Activated B cell treated with CpG ODN at 0.5 μM for 24 hours (primary cell): ENCODE measurements at regions of chr7 and their contacts with region 1.

Region 1: DNA sequence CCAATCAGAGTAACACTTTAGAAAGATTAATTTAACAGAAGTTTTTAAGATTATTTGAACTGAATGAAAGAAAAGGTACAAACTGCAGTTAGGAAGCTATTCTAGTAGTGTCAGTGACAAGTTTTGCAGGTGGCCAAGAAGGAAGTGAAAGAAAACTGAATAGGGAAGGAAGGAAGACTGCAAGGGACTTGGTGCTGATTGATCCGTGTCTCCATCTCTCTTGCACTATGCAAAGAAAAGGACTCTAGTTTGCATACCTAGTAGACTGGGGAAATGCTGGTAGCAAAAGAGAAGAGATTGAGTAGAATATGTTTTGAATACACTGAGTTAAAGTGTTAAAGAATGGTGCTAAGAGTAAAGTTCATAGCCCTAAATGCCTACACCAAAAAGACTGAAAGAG is 33.0 kb downstream of the OR6V1 start:
- DNase-seq: no peak
- ATAC-seq: peak; percentile 98
- H3K4me3 Mint-ChIP-seq: peak overlapping the region; percentile 67
- H3K27ac Mint-ChIP-seq: peak overlapping the region; percentile 88
- H3K4me1 Mint-ChIP-seq: peaks cover 68% of the 10 kb centered on the region
- H3K27me3 Mint-ChIP-seq: no peaks in the 10 kb centered on the region
- CTCF ChIP-seq: no peak

Region 2: DNA sequence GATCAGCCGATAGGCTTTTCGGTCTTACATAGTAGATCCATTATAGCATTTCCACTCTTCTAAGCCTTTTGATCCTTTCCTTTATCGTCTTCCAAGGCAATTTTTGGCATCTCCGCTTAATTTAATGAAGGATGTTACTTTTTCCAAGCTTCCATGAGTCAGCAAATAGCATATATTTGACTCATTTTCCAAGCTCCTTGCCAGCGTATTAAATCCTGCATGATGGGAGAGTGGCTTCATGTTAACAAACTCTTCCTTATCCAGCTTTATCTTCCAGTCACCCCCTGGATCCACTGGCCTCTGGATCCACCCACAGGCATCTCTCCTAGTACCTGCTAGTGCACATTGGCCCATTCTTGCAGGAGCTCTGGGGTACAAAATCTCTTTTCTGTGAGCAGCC is 71.2 kb before region 1 on chr7:
- CTCF ChIA-PET with region 1: interaction called, 12 read pairs
- POLR2A ChIA-PET with region 1: interaction called, 13 read pairs
- intact Hi-C with region 1: loop called (anchors 1 kb)
- DNase-seq: no peak
- ATAC-seq: no peak
- H3K4me3 Mint-ChIP-seq: peak overlapping the region; percentile 21
- H3K27ac Mint-ChIP-seq: peak overlapping the region; percentile 95
- H3K4me1 Mint-ChIP-seq: peaks cover 83% of the 10 kb centered on the region
- H3K27me3 Mint-ChIP-seq: no peaks in the 10 kb centered on the region
- CTCF ChIP-seq: no peak

Region 3: DNA sequence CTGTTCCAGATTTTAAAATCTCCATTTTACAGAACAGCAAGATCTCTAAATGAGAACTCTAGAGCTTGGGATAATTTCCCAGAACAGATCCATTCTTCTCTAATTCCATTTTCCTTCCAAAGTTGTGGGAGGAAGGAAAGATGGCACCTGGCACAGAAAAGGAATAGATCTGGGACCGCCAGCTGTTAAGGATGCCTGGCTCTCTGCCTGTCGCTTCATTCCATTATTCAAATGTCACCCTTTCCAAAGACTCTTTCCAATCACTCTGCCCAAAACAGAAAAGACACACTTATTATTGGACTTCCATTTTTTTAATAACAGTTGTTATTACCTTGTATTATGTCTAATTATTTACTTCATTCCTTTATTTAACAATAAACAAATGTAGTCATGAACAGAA is 57.4 kb before region 1 on chr7:
- CTCF ChIA-PET with region 1: no interaction called
- POLR2A ChIA-PET with region 1: no interaction called
- intact Hi-C with region 1: no loop called
- DNase-seq: no peak
- ATAC-seq: no peak
- H3K4me3 Mint-ChIP-seq: no peak overlapping the region
- H3K27ac Mint-ChIP-seq: no peak overlapping the region
- H3K4me1 Mint-ChIP-seq: peaks cover 8% of the 10 kb centered on the region
- H3K27me3 Mint-ChIP-seq: no peaks in the 10 kb centered on the region
- CTCF ChIP-seq: no peak

Region 4: DNA sequence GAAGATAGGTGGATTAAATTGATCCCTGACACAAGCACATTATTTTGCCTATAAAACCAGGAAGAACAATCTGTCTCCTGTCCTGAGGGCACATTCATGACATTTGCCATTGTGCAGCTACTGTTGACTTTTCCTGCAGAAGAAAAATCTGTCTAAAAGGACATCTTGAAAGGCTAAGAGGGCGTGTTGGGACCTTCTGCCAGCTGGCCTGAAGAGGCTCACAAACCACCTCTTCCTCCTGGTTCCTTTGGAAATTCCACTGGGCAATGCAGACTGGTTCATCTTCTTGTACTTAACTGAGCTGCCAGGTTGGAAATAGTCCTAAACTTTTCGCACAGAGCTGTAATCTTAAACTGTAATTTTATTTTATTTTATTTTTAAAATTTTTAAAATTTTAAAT is 11.0 kb after region 1 on chr7:
- CTCF ChIA-PET with region 1: no interaction called
- POLR2A ChIA-PET with region 1: no interaction called
- intact Hi-C with region 1: loop called (anchors 1 kb)
- DNase-seq: no peak
- ATAC-seq: no peak
- H3K4me3 Mint-ChIP-seq: no peak overlapping the region
- H3K27ac Mint-ChIP-seq: no peak overlapping the region
- H3K4me1 Mint-ChIP-seq: peaks cover 7% of the 10 kb centered on the region
- H3K27me3 Mint-ChIP-seq: no peaks in the 10 kb centered on the region
- CTCF ChIP-seq: no peak

Region 5: DNA sequence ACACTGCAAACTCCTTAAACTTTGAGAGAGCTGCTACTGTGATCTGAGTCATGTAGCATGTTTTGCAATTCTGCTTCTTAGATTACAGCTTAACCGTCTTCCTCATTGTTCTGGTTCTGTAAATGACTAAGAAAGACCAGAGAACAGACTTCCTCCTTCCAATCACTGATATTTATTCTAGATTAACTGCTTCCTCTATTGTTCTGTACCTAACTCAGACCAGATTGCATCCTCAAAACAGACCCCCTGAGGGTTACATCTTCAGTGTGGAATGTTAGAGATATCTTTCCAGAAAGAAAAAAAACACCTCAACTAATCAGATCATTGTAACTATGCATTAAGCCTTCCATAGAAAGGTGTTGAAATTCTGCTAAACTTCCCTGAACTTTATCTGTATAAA is 41.0 kb after region 1 on chr7:
- CTCF ChIA-PET with region 1: interaction called, 4 read pairs
- POLR2A ChIA-PET with region 1: no interaction called
- intact Hi-C with region 1: loop called (anchors 1 kb)
- DNase-seq: no peak
- ATAC-seq: peak; percentile 87
- H3K4me3 Mint-ChIP-seq: no peak overlapping the region
- H3K27ac Mint-ChIP-seq: peak overlapping the region; percentile 6
- H3K4me1 Mint-ChIP-seq: peaks cover 28% of the 10 kb centered on the region
- H3K27me3 Mint-ChIP-seq: no peaks in the 10 kb centered on the region
- CTCF ChIP-seq: no peak

Region 6: DNA sequence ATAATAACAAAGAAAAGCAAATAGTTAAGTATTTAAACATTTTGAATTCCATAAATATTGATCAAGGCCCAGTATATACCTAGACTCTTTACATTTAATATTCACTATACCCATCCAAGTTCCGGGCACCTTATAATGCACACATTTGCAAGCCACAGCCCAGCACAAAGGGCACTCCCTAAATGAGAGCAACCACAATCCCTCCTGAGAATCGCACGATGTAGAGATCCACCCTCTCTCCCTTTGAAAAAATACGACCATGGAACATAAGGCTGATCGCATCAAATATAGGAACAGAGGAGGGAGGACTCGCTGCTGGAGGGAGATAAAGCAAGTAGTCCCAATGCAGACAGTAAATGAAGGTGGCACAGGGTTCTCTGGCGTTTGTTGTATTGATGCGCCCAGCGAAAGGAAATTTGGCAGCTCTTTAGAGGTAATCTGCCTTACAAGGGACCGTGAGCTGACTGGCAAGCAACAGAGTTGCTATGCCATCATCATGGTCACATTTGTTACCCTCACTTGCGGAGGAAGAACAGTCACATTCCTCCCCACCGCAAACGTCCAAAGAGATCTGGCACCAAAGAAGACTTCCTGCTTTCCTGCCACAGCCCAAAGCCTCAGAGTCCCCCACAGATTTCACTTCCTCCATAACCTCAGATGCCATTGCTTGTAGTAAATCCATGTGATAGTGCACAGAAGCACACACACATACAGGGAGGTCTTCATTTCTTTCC is 120.6 kb after region 1 on chr7:
- CTCF ChIA-PET with region 1: no interaction called
- POLR2A ChIA-PET with region 1: interaction called, 3 read pairs
- intact Hi-C with region 1: loop called (anchors 2 kb)
- DNase-seq: peak; percentile 33
- ATAC-seq: peak; percentile 91
- H3K4me3 Mint-ChIP-seq: peak overlapping the region; percentile 65
- H3K27ac Mint-ChIP-seq: peak overlapping the region; percentile 79
- H3K4me1 Mint-ChIP-seq: peaks cover 42% of the 10 kb centered on the region
- H3K27me3 Mint-ChIP-seq: no peaks in the 10 kb centered on the region
- CTCF ChIP-seq: no peak

Region 7: GRCh38 chr7:143214789-143215679 is 129.9 kb after region 1 on chr7:
- CTCF ChIA-PET with region 1: interaction called, 14 read pairs
- POLR2A ChIA-PET with region 1: no interaction called
- intact Hi-C with region 1: loop called (anchors 2 kb)
- DNase-seq: no peak
- ATAC-seq: peak; percentile 97
- H3K4me3 Mint-ChIP-seq: no peak overlapping the region
- H3K27ac Mint-ChIP-seq: no peak overlapping the region
- H3K4me1 Mint-ChIP-seq: peaks cover 16% of the 10 kb centered on the region
- H3K27me3 Mint-ChIP-seq: peaks cover 2% of the 10 kb centered on the region
- CTCF ChIP-seq: peak; percentile 99

Region 8: GRCh38 chr7:143263266-143264195 is 178.4 kb after region 1 on chr7 and contains the start of gene GSTK1:
- CTCF ChIA-PET with region 1: no interaction called
- POLR2A ChIA-PET with region 1: no interaction called
- intact Hi-C with region 1: loop called (anchors 1 kb)
- DNase-seq: peak; percentile 68
- ATAC-seq: peak; percentile 97
- H3K4me3 Mint-ChIP-seq: peak within 1 kb of the TSS; percentile 95
- H3K27ac Mint-ChIP-seq: peak within 1 kb of the TSS; percentile 83
- H3K4me1 Mint-ChIP-seq: peaks cover 52% of the 10 kb centered on the region
- H3K27me3 Mint-ChIP-seq: no peaks in the 10 kb centered on the region
- CTCF ChIP-seq: no peak
- total RNA-seq, gene GSTK1: 144 and 150 TPM in 2 replicates